ENCODE measurements at regions of chr6 and their contacts with region 1.

Region 1: DNA sequence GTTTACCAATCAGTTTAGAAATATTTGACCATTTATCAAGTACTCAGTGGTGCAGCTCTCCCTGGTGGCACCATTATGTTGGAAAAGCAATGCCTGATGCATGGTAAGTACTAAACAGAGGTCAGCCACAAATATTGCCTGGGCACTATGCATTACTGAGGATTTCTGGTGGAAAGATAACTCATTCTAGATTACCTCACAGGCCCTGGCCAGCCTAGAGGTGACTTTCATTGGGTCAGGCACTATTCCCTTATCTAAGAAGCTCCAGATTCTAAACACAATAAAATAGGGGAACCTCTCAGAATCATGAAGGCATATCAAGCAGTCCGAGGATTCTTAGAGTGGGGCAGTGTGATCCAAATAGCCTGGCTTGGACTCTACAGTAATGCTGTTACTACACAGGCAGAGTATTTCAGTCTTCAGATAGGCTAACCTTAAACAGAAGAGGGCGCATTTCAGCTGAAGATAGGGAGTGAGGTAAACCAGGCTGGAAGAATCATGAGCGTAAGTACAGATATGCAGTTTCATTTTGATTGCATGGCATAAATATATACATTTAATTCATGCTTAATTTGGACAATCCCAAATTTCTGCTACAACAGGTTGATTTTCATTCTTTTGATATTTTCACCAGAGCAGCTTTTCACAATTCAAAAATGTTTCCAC is 12.1 kb downstream of the LGSN start:
- DNase-seq: no peak
- H3K4me3 ChIP-seq: no peak overlapping the region
- H3K27ac ChIP-seq: no peak overlapping the region
- H3K4me1 ChIP-seq: no peaks in the 10 kb centered on the region
- H3K27me3 ChIP-seq: no peaks in the 10 kb centered on the region
- CTCF ChIP-seq: peak; percentile 53

Region 2: DNA sequence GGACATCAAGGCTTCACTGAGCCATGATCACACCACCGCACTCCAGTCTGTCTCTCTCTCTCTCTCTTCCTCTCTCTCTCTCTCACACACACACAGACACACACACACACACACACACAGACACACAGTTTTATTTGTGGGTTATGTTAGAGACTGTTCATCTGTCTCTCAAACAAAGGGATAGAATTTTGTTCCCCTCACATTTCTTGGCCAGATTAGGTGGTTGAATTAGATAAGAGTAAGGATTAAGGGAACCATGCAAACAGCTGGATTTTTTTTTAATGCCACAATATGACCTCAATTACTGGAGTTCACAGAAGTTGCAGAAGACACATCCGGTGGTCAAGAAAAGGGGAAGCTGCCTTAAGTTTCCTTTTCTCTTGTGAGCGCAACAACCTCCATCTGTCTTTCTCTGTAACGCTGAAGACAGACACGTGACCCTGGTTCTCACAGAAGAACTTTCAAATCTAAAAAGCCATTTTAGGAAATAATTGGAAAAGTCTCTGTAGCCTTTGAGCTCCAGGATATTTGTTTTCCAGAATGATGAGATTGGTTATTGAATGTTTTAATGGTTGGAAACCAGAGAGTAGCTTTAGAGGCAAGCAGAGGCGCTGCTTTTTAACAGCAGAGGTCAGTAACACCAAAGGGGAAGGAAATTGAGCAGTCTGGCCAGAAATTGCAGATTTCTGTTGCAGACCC is 45.0 kb after region 1 on chr6:
- CTCF ChIA-PET with region 1: no interaction called
- POLR2A ChIA-PET with region 1: no interaction called
- intact Hi-C with region 1: no loop called
- DNase-seq: peak in 1 of 2 experiments; percentile 39
- H3K4me3 ChIP-seq: no peak overlapping the region
- H3K27ac ChIP-seq: no peak overlapping the region
- H3K4me1 ChIP-seq: peaks cover 12% of the 10 kb centered on the region
- H3K27me3 ChIP-seq: no peaks in the 10 kb centered on the region
- CTCF ChIP-seq: peak; percentile 71

Region 3: DNA sequence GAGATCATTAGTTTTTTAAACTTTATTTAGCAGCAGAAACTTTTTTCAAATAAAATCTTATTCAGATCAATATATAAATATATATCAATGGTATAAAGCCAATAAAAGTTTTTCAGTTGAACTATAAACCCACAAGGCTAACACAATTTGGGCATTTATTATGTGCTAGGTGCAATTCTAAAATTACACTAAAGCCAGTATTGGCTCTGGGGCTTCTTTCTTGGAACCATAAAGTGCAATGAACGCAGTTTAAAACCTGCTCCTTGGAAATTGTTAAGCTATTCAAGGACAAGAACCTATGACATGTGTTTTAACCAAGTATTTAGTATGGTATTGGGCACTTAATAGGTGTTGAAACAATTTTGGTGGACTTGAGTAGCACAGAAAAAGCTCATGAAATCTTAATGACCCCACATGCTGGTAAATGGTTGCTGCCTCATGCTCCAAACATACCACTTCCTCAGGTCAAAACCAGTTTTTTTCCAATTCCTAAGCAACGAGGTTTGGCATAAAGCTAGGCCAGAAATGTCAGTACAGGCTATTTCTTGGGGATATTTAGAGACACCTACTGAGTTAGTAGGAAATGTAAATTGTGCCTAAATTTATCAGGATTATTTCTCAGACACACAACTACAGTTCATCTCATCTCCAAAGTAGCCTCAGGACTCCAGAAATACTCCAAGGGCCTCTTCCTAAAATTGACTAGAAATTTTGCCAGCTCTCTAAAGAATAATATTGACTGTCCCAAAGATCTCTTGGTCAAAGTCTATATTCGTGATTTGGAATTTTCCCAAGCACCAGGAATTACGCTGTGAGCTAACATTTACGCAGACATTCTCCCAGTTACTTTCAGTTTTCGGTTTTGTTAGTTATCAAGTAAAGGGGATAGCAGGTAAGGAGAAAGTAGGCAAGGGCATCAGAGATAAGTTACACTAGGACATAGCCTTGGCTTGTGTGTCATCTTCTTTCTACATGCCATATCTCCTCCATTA is 103.0 kb after region 1 on chr6:
- CTCF ChIA-PET with region 1: no interaction called
- POLR2A ChIA-PET with region 1: no interaction called
- intact Hi-C with region 1: no loop called
- DNase-seq: no peak
- H3K4me3 ChIP-seq: no peak overlapping the region
- H3K27ac ChIP-seq: no peak overlapping the region
- H3K4me1 ChIP-seq: no peaks in the 10 kb centered on the region
- H3K27me3 ChIP-seq: no peaks in the 10 kb centered on the region
- CTCF ChIP-seq: no peak

Region 4: GRCh38 chr6:63764318-63764916 is 456.7 kb after region 1 on chr6:
- CTCF ChIA-PET with region 1: no interaction called
- POLR2A ChIA-PET with region 1: no interaction called
- intact Hi-C with region 1: loop called (anchors 2 kb)
- DNase-seq: no peak
- H3K4me3 ChIP-seq: no peak overlapping the region
- H3K27ac ChIP-seq: no peak overlapping the region
- H3K4me1 ChIP-seq: no peaks in the 10 kb centered on the region
- H3K27me3 ChIP-seq: no peaks in the 10 kb centered on the region
- CTCF ChIP-seq: peak; percentile 79

Region 5: GRCh38 chr6:63802606-63803206 is 495.0 kb after region 1 on chr6:
- CTCF ChIA-PET with region 1: no interaction called
- POLR2A ChIA-PET with region 1: no interaction called
- intact Hi-C with region 1: loop called (anchors 1 kb)
- DNase-seq: no peak
- H3K4me3 ChIP-seq: no peak overlapping the region
- H3K27ac ChIP-seq: no peak overlapping the region
- H3K4me1 ChIP-seq: peaks cover 37% of the 10 kb centered on the region
- H3K27me3 ChIP-seq: no peaks in the 10 kb centered on the region
- CTCF ChIP-seq: peak; percentile 80